Activated T-helper 1 cell treated with anti-CD3 and anti-CD28 coated beads, Interleukin-12 subunit alpha, Interleukin-12 subunit beta, Interleukin-2, Interleukin-4 antibody, amounts not matched to agents 30 ng/mL and 10 ng/mL and 1 ng/mL, durations not matched to agents 14 hours and 24 hours and 36 hours (primary cell): ENCODE measurements at regions of chr1 and their contacts with region 1.

Region 1: GRCh38 chr1:65235867-65236805 is 73.2 kb upstream of the DNAJC6 start:
- DNase-seq: no peak
- H3K4me3 Mint-ChIP-seq: no peak overlapping the region
- H3K27ac Mint-ChIP-seq: no peak overlapping the region
- H3K4me1 Mint-ChIP-seq: peaks cover 15% of the 10 kb centered on the region
- H3K27me3 Mint-ChIP-seq: peaks cover 2% of the 10 kb centered on the region

Region 2: GRCh38 chr1:65195495-65196417 is 40.4 kb before region 1 on chr1:
- intact Hi-C with region 1: no loop called
- DNase-seq: no peak
- H3K4me3 Mint-ChIP-seq: no peak overlapping the region
- H3K27ac Mint-ChIP-seq: peak overlapping the region; percentile 26
- H3K4me1 Mint-ChIP-seq: peaks cover 31% of the 10 kb centered on the region
- H3K27me3 Mint-ChIP-seq: no peaks in the 10 kb centered on the region

Region 3: DNA sequence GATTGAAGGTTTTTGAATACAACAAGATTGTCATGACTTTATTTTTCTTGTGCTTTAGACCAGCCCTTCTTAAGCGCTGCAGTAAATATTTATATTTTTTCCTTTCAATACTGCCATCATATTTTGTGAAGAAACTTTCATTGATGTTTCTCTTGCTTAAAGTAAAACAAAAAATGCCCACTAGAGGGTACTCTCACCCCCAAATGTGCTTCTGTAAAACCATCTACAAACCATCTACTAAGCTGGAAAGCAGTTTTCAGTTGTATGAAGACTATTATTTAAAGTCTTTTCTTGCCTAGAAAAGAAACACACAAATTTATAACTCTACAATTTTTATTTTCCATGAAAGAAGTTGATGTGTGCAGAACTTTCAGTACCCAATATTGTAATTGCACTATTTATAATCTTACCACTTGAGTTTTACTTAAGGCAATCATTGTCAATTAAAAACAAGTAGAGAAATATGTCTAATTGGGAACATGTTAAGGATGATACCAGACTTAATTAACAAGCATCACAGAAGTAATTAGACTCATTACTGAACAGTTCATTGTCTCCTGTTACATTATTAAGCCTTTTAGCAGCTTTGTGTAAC is 195.1 kb after region 1 on chr1:
- intact Hi-C with region 1: loop called (anchors 1 kb)
- DNase-seq: no peak
- H3K4me3 Mint-ChIP-seq: no peak overlapping the region
- H3K27ac Mint-ChIP-seq: no peak overlapping the region
- H3K4me1 Mint-ChIP-seq: peaks cover 30% of the 10 kb centered on the region
- H3K27me3 Mint-ChIP-seq: no peaks in the 10 kb centered on the region

Region 4: DNA sequence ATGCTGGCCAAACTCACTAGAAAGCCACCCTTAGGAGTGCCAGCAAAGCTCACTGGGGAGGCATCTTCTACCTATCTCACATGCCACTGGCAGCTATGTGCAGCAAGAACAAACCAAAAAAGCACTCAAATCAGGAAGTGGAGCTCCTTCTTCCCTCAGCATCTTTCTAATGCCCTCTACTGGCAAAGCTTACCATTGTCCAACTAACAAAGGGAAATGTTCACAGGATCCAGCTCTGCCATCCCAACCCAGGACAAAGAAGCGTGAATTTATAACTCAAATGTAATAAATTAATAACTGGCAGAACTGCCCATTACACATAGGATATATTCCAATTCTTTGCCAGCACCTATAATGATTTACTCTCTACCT is 223.2 kb after region 1 on chr1:
- intact Hi-C with region 1: loop called (anchors 1 kb)
- DNase-seq: peak; percentile 2
- H3K4me3 Mint-ChIP-seq: no peak overlapping the region
- H3K27ac Mint-ChIP-seq: no peak overlapping the region
- H3K4me1 Mint-ChIP-seq: peaks cover 26% of the 10 kb centered on the region
- H3K27me3 Mint-ChIP-seq: no peaks in the 10 kb centered on the region